ENCODE measurements at regions of chr2 and their contacts with region 1.

Region 1: DNA sequence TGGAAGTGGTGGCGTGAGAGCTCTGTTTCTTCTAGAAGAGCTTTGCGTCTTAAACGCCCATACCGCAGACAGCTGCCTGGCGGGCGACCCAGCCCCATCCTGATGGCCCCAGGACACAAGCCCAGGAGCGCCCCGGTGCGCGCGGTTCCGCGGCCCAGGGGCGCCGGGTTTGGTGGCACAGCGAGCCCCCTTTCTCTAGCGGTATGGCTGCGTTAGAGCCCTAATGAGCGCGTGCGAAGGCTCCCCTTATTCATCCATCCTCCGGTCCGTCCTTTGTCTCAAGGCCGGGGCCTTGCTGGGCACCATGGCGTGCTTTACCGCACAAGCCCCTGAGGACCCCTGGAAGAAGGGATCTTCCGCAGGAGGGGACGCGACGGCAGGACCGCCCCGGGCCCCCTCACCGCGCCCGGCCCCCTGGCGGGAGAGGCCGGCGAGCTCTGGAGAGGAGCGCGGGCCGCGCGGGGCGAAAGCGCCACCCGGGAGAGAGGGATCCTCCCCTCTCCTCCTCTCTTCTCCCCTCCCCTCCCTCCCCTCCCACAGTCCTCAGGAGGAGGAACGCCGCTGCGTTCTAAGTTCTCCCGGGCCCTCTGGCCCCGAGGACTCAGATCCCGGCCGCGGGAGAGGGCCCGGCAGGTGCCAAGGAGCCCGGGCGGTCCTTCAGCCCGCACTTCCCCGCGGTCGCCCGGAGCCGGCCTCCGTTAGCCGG is 626 bp upstream of the SLC1A4 start:
- DNase-seq: peak; percentile 10 to 82 (median 51)
- ATAC-seq: peak; percentile 41
- H3K4me3 ChIP-seq: peak overlapping the region; percentile 57 to 68
- H3K4me3 Mint-ChIP-seq: peak overlapping the region; percentile 77
- H3K27ac ChIP-seq: peak overlapping the region; percentile 31 to 36
- H3K27ac Mint-ChIP-seq: no peak overlapping the region
- H3K4me1 ChIP-seq: peaks cover 11% of the 10 kb centered on the region
- H3K4me1 Mint-ChIP-seq: peaks cover 27% of the 10 kb centered on the region
- H3K27me3 ChIP-seq: no peaks in the 10 kb centered on the region
- H3K27me3 Mint-ChIP-seq: peaks cover 7% of the 10 kb centered on the region
- CTCF ChIP-seq: no peak

Region 2: GRCh38 chr2:64945973-64946768 is 42.4 kb before region 1 on chr2:
- CTCF ChIA-PET with region 1: no interaction called
- POLR2A ChIA-PET with region 1: no interaction called
- intact Hi-C with region 1: loop called in 1 of 2 experiments (anchors 2 kb)
- DNase-seq: peak; percentile 30 to 80 (median 55)
- ATAC-seq: peak; percentile 88
- H3K4me3 ChIP-seq: peak overlapping the region; percentile 31 to 40
- H3K4me3 Mint-ChIP-seq: peak overlapping the region; percentile 74
- H3K27ac ChIP-seq: peak overlapping the region; percentile 2 to 66
- H3K27ac Mint-ChIP-seq: peak overlapping the region; percentile 86
- H3K4me1 ChIP-seq: peaks cover 24% of the 10 kb centered on the region
- H3K4me1 Mint-ChIP-seq: peaks cover 32% of the 10 kb centered on the region
- H3K27me3 ChIP-seq: no peaks in the 10 kb centered on the region
- H3K27me3 Mint-ChIP-seq: no peaks in the 10 kb centered on the region
- CTCF ChIP-seq: no peak

Region 3: DNA sequence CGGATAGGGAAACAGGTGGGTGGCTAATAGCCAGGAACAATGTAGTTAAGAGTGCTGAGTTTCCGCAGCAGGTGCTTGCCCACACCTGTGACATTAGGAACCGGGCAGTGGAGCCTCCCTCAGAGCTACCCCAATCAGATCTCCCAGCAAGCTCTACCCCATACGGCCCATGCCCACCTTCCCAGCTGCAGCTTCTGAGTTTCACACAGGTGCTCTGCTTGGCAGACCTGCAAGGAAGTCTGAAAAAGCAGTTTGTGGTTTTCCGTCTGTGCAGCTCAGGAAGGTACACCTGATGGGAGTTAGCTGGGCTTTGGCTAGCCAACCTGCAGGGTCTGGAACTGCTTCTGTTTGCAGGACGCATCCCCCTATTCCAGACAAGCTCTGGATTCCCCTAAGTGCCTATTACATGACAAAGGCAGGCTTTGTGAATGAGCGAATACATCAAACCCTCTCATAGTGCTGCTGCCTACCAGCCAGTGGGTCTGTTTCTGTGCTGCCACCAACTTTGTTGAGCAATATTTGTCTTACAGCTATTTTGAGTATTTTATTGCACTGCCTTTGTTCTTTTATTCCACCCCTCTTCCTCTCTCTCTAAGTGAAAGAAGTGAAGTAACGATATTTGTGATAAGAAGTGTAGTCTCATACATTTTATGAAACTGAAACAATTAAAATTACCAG is 42.9 kb after region 1 on chr2:
- CTCF ChIA-PET with region 1: no interaction called
- POLR2A ChIA-PET with region 1: no interaction called
- intact Hi-C with region 1: loop called in 1 of 2 experiments (anchors 5 kb)
- DNase-seq: peak in 4 of 9 experiments; percentile 4 to 53 (median 18)
- ATAC-seq: peak; percentile 55
- H3K4me3 ChIP-seq: peak overlapping the region in 1 of 2 experiments; percentile 6
- H3K4me3 Mint-ChIP-seq: peak overlapping the region; percentile 32
- H3K27ac ChIP-seq: no peak overlapping the region
- H3K27ac Mint-ChIP-seq: peak overlapping the region; percentile 42
- H3K4me1 ChIP-seq: peaks cover 22% of the 10 kb centered on the region
- H3K4me1 Mint-ChIP-seq: peaks cover 26% of the 10 kb centered on the region
- H3K27me3 ChIP-seq: no peaks in the 10 kb centered on the region
- H3K27me3 Mint-ChIP-seq: no peaks in the 10 kb centered on the region
- CTCF ChIP-seq: no peak

Region 4: DNA sequence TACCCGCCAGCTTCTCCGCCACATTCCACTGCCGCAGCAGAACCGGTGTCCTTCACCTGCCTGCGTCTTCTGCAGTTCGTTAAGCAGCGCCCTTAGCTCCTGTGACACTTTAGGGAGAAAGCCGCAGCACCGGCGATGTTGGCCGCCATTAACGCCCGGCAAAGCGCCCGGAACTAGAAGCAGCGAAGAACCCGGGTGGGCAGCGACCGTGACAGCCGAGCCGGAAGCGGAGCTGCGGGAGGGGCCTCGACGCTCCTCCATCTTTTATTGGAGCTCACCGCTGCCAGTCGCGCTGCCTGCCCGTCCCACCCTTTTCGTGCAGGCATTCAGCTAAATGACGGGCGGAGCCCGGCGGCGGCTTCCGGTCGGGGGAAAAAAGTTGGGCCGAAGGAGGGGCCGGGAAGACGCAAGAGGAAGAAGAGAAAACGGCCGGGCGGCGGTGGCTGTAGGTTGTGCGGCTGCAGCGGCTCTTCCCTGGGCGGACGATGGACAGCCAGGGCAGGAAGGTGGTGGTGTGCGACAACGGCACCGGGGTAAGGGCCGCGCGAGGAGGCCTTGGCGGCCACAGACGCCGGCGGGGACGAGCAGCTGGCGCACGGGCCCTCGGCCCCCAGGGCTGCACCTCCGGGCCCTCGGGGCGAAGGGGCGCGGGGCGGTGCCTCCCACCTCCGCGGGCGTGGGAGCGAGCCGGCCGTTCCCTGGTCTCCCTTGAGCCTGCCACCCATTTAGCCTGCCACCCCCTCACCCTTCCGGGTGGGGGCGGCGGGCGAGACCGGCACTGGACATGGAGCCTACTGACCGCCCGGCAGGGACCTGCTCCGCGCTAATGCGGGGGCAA is 239.1 kb after region 1 on chr2 and contains the start of gene ACTR2:
- CTCF ChIA-PET with region 1: no interaction called
- POLR2A ChIA-PET with region 1: no interaction called
- intact Hi-C with region 1: loop called in 1 of 2 experiments (anchors 5 kb)
- DNase-seq: peak; percentile 87 to 98 (median 94)
- ATAC-seq: peak; percentile 94
- H3K4me3 ChIP-seq: peak within 1 kb of the TSS; percentile 74 to 89
- H3K4me3 Mint-ChIP-seq: peak within 1 kb of the TSS; percentile 99
- H3K27ac ChIP-seq: peak within 1 kb of the TSS; percentile 94 to 98
- H3K27ac Mint-ChIP-seq: peak within 1 kb of the TSS; percentile 99
- H3K4me1 ChIP-seq: peaks cover 43% of the 10 kb centered on the region
- H3K4me1 Mint-ChIP-seq: peaks cover 47% of the 10 kb centered on the region
- H3K27me3 ChIP-seq: no peaks in the 10 kb centered on the region
- H3K27me3 Mint-ChIP-seq: no peaks in the 10 kb centered on the region
- CTCF ChIP-seq: no peak
- total RNA-seq, gene ACTR2: 101 to 117 TPM